Activated naive CD8-positive, alpha-beta T cell treated with anti-CD3 and anti-CD28 coated beads, Interleukin-2, amount 10 ng/mL, durations not matched to agents 7 days and 5 days (primary cell): ENCODE measurements at regions of chr6 and their contacts with region 1.

Region 1: DNA sequence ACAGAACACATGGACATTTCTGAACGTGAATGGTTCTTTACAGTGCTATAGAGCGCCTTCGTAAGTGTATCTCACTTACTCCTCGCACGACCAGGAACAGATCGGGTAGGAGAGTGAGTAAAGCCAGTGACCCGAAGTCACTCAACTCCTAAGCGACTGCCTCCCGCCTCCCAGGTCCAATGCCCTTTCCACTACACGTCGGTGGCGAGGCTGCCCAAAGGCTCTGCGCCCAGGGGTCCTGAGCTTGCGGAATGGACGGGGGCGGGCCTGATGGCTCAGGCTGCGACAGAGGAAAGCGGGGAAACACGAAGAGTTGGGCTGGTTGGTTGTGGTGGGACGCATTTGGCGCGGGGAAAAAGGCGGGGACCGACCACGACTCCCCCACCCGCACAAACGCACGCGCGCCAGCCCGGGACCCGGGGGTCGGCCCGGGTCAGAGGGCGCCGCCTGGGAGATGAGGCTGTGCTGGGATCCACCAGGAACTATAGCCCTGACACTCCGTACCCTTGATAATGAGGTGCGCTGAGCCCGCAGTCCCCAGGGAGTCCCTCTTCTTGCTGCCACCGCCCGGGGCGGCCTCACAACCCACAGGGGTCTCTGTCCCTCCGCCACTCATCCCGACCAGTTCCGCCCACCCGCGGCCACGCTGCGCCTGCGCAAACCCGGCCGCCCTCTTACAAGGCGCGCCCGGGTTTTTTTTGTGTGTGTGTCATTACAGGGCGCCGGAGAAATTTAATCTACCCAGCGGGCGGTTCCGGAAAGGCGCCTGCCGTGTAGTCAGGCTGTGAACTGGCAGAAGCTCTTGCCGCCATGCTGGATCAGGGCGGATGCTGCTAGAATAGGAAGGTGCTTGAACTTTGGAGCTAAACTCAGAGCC is at the start of gene BLOC1S5:
- DNase-seq: peak; percentile 94
- ATAC-seq: peak; percentile 97
- H3K4me3 Mint-ChIP-seq: peak within 1 kb of the TSS; percentile 93
- H3K27ac Mint-ChIP-seq: peak within 1 kb of the TSS; percentile 91
- H3K4me1 Mint-ChIP-seq: peaks cover 13% of the 10 kb centered on the region
- H3K27me3 Mint-ChIP-seq: no peaks in the 10 kb centered on the region
- total RNA-seq, gene BLOC1S5: 17.1 to 25.9 TPM

Region 2: DNA sequence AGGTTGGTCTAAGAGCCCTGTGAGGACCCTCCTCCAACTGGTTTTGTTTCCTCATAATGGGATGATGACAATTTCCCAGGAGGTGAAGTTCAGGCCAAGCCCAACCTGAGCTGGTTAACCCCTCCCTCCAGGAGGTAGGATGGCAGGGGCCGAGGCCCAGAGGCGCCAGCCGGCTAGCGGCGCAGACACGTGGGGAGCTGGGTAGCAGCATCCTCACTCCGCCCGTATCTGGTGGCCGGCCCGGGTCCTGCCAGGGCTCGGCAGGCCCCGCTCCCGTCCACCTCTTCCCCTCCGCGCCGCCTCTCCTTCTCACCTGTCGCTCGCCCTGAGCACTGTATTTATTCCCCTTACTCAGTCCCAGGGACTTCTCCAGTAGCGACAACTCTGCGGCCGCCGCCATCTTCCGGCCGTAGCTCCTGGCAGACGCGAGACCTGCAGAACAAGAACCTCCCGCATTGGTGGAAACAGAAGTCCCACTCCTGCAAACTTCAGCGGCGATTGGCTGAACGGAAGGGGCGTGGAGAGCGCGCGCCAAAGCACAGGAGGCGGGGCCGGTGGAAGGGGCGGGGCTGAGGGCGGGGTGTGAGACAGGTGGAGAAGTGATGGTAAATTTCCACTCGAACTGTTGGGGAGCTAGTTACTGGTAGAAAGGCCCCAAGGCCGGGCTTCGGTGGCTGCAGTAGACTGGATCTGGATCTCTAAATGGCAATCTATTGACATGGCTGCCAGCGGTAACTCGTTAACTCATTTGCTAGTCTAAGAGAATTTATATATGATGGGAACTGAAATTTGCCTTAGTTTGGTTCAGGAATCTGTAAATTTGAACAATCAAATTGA is 38.3 kb after region 1 on chr6 and contains the start of gene EEF1E1:
- POLR2A ChIA-PET with region 1: interaction called, 35 read pairs
- DNase-seq: peak; percentile 89
- ATAC-seq: peak; percentile 98
- H3K4me3 Mint-ChIP-seq: peak within 1 kb of the TSS; percentile 100
- H3K27ac Mint-ChIP-seq: peak within 1 kb of the TSS; percentile 97
- H3K4me1 Mint-ChIP-seq: peaks cover 27% of the 10 kb centered on the region
- H3K27me3 Mint-ChIP-seq: peaks cover 13% of the 10 kb centered on the region
- total RNA-seq, gene EEF1E1: 26.0 to 26.7 TPM

Region 3: DNA sequence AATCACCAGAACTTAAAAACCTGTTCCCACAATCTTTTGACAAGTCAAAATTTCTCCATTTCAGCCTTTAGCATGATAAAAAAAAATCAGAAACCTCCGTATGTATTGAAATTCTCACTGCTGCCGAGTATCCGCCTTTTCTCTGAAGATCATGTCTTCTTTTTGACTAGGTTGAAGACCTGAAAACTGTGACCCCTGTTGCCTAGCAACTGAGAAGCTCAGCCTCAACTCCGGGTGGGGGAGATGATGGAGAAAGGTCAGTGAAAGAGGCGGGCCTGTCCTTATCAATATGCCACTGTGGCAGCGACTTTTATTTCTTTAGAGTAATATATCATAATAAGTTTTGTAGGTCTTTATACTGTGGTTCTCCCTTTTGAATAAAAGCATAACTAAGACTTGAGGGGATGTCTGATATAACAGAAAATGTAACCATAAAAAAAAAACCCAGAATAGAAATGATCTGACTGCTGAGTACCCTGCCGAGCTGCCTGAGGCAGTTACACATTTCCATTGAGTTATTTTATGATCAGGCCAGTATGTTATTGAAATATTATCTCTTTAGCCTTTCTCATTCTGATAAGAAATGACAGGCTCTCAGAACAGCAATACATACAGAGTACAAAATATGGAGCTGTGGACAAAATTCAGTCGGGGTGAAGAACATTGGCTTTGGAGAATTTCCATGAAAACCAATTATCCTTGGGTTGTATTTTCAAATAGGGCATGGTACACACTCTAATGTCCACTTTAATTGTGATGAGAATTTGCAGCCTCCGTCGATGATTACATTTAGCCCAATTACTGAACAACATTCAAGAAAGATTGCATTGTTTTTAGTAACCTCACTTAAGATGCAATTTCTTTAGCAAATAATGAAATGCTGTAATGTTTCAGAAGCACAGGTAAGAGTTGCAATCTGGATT is 175.0 kb after region 1 on chr6:
- POLR2A ChIA-PET with region 1: no interaction called
- DNase-seq: no peak
- ATAC-seq: no peak
- H3K4me3 Mint-ChIP-seq: no peak overlapping the region
- H3K27ac Mint-ChIP-seq: no peak overlapping the region
- H3K4me1 Mint-ChIP-seq: no peaks in the 10 kb centered on the region
- H3K27me3 Mint-ChIP-seq: peaks cover 7% of the 10 kb centered on the region